Activated CD4-positive, alpha-beta memory T cell treated with anti-CD3 and anti-CD28 coated beads, Interleukin-2, amount 10 ng/mL, durations not matched to agents 7 days and 5 days (primary cell): ENCODE measurements at regions of chr11 and their contacts with region 1.

Region 1: DNA sequence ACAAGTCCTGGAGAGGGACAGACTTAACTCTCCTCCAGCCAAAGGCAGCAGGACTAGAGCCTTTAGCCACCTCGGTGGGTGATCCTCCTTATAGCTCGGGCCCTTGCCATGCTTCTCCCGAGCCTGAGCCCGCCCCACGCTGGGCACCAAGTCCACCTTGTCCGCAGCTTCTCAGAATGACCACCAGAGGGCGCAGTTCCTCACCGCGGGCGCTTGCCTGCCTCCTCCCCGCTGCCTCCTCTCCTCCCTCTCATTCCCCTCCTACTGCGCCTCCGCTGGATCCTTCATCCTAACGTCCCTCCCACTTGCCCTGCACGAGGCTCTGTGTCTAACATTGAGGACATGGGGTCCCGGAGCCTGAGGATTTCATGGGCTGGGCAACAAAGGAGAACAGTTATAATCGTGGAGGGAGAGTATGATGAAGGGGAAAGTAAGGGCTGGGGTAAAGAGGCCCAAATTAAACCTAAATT is 11.3 kb upstream of the MOGAT2 start:
- DNase-seq: peak; percentile 69
- H3K4me3 Mint-ChIP-seq: no peak overlapping the region
- H3K27ac Mint-ChIP-seq: no peak overlapping the region
- H3K4me1 Mint-ChIP-seq: peaks cover 9% of the 10 kb centered on the region
- H3K27me3 Mint-ChIP-seq: peaks cover 9% of the 10 kb centered on the region

Region 2: GRCh38 chr11:75689863-75690609 is 16.3 kb before region 1 on chr11:
- CTCF ChIA-PET with region 1: interaction called, 11 read pairs
- POLR2A ChIA-PET with region 1: no interaction called
- DNase-seq: no peak
- H3K4me3 Mint-ChIP-seq: no peak overlapping the region
- H3K27ac Mint-ChIP-seq: no peak overlapping the region
- H3K4me1 Mint-ChIP-seq: peaks cover 8% of the 10 kb centered on the region
- H3K27me3 Mint-ChIP-seq: peaks cover 66% of the 10 kb centered on the region

Region 3: GRCh38 chr11:75735181-75735845 is 29.0 kb after region 1 on chr11:
- CTCF ChIA-PET with region 1: interaction called, 10 read pairs
- POLR2A ChIA-PET with region 1: no interaction called
- DNase-seq: no peak
- H3K4me3 Mint-ChIP-seq: no peak overlapping the region
- H3K27ac Mint-ChIP-seq: no peak overlapping the region
- H3K4me1 Mint-ChIP-seq: peaks cover 10% of the 10 kb centered on the region
- H3K27me3 Mint-ChIP-seq: peaks cover 20% of the 10 kb centered on the region